Mammary epithelial cell (primary cell): ENCODE measurements at regions of chr2 and their contacts with region 1.

Region 1: GRCh38 chr2:71348302-71348701 is 16.7 kb downstream of the ZNF638 start:
- DNase-seq: peak; percentile 10
- H3K4me3 ChIP-seq: no peak overlapping the region
- H3K27ac ChIP-seq: no peak overlapping the region
- H3K4me1 ChIP-seq: no peaks in the 10 kb centered on the region
- H3K27me3 ChIP-seq: no peaks in the 10 kb centered on the region
- CTCF ChIP-seq: no peak

Region 2: DNA sequence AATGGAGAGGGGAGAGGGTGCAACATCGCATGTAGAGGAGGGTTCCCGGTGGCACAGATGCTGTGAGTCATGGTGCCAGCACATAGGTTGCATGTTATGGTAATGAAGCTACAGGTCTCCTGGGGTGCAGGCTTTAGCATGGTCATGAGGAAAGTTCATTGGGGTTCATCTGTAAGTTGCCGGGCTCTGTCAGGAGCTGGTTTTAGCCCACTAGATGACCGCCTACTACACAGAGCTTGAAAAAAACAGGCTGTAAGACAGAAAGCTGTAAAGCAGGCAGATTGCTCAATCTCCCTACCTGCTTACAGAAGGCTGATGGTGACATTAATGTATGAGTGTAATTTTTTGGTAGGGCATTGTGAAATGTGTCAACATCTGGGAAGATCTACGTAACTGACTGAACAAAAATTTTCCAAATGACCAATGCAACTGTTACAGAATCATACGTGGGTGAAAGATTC is 129.0 kb after region 1 on chr2:
- CTCF ChIA-PET with region 1: interaction called, 15 read pairs
- dilution Hi-C with region 1: no loop called
- in situ Hi-C with region 1: no loop called
- intact Hi-C with region 1: no loop called
- DNase-seq: peak; percentile 56
- H3K4me3 ChIP-seq: no peak overlapping the region
- H3K27ac ChIP-seq: no peak overlapping the region
- H3K4me1 ChIP-seq: no peaks in the 10 kb centered on the region
- H3K27me3 ChIP-seq: no peaks in the 10 kb centered on the region
- CTCF ChIP-seq: no peak